ENCODE measurements at regions of chr5 and their contacts with region 1.

Region 1: GRCh38 chr5:10452768-10453331 is 11.2 kb downstream of the ROPN1L start:
- DNase-seq: peak; percentile 82
- ATAC-seq: peak; percentile 76
- H3K4me3 ChIP-seq: no peak overlapping the region
- H3K27ac ChIP-seq: peak overlapping the region; percentile 44; the same call in 1 of the 2 replicates
- H3K4me1 ChIP-seq: peaks cover 44% of the 10 kb centered on the region
- H3K27me3 ChIP-seq: no peaks in the 10 kb centered on the region
- CTCF ChIP-seq: peak; percentile 82

Region 2: DNA sequence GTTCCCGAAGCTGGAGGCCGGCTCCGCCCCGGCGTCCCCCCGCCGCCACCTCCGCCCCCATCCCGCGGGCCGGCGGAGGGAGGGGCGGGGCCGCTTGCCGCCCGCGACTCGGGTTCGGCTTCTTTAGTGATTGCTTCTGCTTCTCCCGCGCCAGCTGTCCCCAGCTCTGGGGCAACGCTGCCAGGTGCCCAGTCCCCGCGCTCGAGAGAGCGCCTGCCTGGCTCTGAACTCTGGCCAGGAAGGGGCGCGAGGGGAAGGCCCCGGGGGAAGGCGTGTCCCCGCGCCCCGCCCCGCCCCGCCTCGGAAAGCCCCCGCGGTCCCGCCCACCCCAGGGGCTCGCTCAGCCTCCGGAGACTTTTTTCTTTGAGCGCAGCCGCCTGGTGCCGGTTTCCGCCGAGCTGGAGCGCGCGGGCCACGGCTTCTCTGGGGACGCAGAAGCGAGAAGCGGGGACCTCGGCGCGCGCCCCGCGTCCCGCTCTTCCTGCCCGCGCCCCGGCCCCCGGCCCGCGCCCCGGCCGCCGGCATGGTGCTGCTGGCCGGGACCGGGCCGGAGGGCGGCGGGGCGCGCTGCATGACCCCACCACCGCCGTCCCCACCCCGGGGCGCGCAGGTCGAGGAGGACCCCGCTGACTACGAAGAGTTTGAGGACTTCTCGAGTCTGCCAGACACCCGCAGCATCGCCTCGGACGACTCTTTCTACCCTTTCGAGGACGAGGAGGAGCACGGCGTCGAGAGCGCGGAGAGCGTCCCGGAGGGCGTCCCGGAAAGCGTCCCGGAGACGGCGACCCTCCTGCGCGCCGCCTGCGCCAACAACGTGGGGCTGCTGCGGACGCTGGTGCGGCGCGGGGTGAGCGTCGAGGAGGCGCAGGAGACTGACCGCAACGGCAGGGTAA is 111.3 kb after region 1 on chr5 and contains the start of gene ANKRD33B:
- CTCF ChIA-PET with region 1: interaction called, 8 read pairs
- POLR2A ChIA-PET with region 1: no interaction called
- in situ Hi-C with region 1: no loop called
- intact Hi-C with region 1: loop called (anchors 10 kb)
- DNase-seq: no peak
- ATAC-seq: peak; percentile 81
- H3K4me3 ChIP-seq: peak within 1 kb of the TSS; percentile 59 to 70
- H3K27ac ChIP-seq: peak within 1 kb of the TSS; percentile 78
- H3K4me1 ChIP-seq: peaks cover 33% of the 10 kb centered on the region
- H3K27me3 ChIP-seq: no peaks in the 10 kb centered on the region
- CTCF ChIP-seq: no peak
- total RNA-seq, gene ANKRD33B: 19.1 TPM

Region 3: DNA sequence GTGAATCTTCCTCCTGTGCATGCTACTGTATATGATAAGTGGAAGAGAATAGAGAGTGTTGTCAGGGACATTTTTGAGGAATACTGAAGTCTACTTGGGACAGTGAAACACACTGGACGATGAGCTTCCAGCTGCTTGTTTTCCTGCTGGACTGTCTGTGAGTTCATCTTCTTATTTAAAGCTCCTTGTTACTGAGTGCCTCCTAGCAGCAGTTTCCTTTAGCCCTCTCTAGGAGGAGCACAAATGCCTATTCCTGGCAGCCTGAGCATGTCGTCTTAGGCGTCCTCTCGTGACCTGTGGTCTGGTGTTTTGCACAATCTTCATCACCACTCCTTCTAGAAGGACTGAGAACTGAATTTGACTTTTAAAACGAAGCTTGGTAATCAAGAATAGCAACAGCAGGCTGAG is 154.8 kb after region 1 on chr5:
- CTCF ChIA-PET with region 1: interaction called, 15 read pairs
- POLR2A ChIA-PET with region 1: no interaction called
- in situ Hi-C with region 1: no loop called
- intact Hi-C with region 1: no loop called
- DNase-seq: no peak
- ATAC-seq: no peak
- H3K4me3 ChIP-seq: no peak overlapping the region
- H3K27ac ChIP-seq: no peak overlapping the region
- H3K4me1 ChIP-seq: no peaks in the 10 kb centered on the region
- H3K27me3 ChIP-seq: no peaks in the 10 kb centered on the region
- CTCF ChIP-seq: no peak

Region 4: DNA sequence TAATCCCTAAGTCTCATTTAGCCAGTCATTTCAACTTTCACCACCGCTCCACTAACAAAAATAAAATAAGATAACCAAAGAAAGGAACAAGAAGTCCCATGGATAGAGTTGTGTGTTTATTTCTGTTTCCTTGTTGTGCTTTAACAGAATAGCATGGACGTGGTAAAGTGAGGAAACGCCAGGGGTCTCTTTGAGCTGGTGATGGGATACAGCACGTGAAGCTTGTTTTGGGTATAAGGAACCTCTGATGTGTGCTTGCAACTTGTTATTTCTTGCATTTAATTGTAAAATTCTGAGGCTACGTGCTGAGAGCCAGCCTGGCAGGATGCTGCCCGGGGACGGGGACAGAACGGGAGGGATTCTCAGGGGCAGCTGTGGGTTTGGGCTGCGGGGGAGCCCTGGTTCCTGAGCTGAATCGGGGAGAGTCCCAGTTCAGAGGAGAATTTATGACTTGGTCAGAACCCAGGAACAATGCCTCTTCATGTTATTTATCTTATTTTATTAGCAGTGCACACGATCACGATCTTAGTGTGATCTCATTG is 174.4 kb after region 1 on chr5:
- CTCF ChIA-PET with region 1: interaction called, 53 read pairs
- POLR2A ChIA-PET with region 1: no interaction called
- in situ Hi-C with region 1: no loop called
- intact Hi-C with region 1: loop called (anchors 1 kb)
- DNase-seq: no peak
- ATAC-seq: peak; percentile 54
- H3K4me3 ChIP-seq: peak overlapping the region; percentile 29 to 64
- H3K27ac ChIP-seq: peak overlapping the region; percentile 65
- H3K4me1 ChIP-seq: peaks cover 16% of the 10 kb centered on the region
- H3K27me3 ChIP-seq: no peaks in the 10 kb centered on the region
- CTCF ChIP-seq: no peak

Region 5: DNA sequence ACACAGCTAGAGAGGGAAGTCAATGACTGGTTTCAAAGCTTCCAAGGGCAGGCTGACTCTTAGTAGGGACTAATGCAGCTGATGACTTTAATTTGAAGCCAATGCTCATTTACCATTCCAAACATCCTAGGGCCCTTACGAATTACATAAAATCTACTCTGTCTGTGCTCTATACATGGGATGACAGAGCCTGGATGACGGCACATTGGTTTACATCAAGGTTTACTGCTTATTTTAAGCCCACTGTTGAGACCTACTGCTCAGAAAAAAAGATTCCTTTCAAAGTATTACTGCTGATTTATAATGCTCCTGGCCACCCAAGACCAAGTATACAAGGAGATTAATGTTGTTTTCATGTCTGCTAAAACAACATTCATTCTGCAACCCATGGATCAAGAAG is 234.0 kb after region 1 on chr5:
- CTCF ChIA-PET with region 1: no interaction called
- POLR2A ChIA-PET with region 1: no interaction called
- in situ Hi-C with region 1: no loop called
- intact Hi-C with region 1: loop called (anchors 2 kb)
- DNase-seq: no peak
- ATAC-seq: no peak
- H3K4me3 ChIP-seq: no peak overlapping the region
- H3K27ac ChIP-seq: no peak overlapping the region
- H3K4me1 ChIP-seq: no peaks in the 10 kb centered on the region; the same call in 1 of the 2 replicates
- H3K27me3 ChIP-seq: no peaks in the 10 kb centered on the region
- CTCF ChIP-seq: no peak

Region 6: DNA sequence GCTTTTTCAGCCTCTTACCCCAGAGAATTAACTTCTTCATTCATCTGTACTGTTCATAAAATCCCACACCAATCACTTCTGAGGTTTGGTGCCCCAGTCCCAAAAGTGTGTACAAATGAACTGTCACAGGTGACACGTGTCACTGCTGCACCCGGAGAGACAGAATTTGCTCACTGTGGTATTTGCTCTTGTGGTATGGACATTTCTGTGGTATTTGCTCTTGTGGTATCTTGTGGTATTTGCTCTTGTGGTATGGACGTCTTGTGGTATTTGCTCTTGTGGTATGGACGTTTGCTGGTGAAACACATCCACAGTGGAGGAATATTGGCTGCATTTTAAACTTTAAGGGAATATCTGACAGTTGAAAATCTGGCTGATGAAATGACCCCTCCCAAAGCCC is 523.1 kb after region 1 on chr5:
- CTCF ChIA-PET with region 1: no interaction called
- POLR2A ChIA-PET with region 1: no interaction called
- in situ Hi-C with region 1: no loop called
- intact Hi-C with region 1: loop called (anchors 5 kb)
- DNase-seq: no peak
- ATAC-seq: no peak
- H3K4me3 ChIP-seq: no peak overlapping the region
- H3K27ac ChIP-seq: no peak overlapping the region
- H3K4me1 ChIP-seq: no peaks in the 10 kb centered on the region
- H3K27me3 ChIP-seq: peaks cover 20% of the 10 kb centered on the region
- CTCF ChIP-seq: no peak

Region 7: DNA sequence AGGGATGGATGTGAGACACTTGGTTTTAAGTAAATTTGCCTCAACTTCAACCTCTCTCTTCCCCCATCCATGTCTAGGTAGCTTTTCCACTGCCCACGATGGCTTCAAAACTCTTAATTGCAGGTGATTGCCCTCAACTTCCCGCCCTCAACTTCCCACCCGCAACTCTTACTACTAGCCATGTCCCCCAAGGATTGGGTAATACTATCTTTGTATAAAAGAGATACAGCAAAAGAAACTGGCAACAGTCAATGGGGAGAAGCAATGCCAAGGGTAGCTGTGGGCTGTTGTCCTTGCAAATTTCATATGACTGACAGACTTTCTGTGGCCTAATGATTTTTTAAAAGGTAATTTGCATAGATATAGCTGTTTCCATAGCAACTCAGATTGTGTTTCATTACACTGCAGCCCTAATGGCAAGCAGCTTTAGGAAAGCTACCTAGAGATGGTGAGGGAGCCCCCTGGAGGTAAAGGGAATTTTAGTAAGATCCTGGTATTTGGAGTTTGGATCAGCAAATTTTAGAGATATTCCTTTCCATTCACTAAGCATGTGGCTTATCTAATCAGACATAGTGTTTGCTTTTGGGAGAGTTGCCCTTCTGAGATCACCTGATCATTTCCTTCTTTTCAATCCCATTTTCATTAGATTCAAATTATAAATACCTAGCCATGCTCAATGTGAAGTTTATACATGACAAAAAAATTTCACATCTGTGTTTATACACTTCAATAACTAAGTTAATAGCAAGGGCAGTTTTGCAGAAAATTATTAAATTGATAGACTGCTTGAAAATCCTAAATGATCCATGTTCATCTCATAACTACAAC is 729.8 kb after region 1 on chr5:
- CTCF ChIA-PET with region 1: no interaction called
- POLR2A ChIA-PET with region 1: no interaction called
- in situ Hi-C with region 1: no loop called
- intact Hi-C with region 1: loop called (anchors 10 kb)
- DNase-seq: peak; percentile 12
- ATAC-seq: peak; percentile 74
- H3K4me3 ChIP-seq: no peak overlapping the region
- H3K27ac ChIP-seq: no peak overlapping the region
- H3K4me1 ChIP-seq: no peaks in the 10 kb centered on the region
- H3K27me3 ChIP-seq: peaks cover 7% of the 10 kb centered on the region
- CTCF ChIP-seq: peak; percentile 71